ENCODE measurements at regions of chr17 and their contacts with region 1.

Region 1: DNA sequence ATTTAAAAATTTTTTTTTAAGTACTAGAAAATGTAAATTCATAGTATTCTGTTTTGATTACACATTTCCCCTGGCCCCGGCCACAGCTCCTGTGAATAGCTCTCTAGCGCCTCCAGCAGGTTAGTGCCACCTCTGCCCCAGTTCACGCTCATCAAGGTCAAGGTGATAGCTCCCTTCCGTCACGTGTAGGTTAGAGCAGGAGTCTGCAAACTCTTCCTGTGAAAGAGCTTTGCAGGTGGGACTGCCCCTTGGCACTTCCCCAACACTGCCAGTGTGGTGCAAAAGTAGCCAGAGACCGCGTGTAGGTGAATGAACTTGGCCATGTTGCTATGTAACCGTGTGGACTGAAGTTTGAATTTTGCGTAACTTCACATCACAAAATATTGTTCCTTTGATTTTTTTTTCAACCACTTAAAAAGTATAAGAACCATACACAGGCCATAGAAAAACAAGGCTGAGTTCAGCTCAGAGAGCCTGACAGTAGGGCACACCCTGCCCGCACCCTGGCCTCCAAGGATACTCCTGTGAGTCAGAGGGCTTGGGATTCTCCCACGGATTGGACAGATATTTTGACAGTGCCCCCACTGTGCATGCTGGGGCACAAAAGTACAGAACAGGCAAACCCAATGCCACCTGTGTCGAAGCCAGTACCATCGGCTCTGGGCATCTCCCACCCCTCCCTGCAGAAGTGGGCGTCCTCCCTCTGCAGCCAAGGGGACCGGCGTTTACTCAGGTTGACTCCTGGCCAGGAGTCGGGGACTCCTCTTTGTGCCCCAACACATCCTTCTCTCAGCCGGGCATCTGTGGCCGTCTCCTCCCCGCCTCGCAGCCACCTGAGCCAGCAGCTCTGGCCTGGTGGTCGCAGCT is 92.0 kb upstream of the CHMP6 start:
- DNase-seq: peak; percentile 87
- ATAC-seq: peak; percentile 78
- H3K4me3 Mint-ChIP-seq: no peak overlapping the region
- H3K27ac Mint-ChIP-seq: peak overlapping the region; percentile 27
- H3K4me1 Mint-ChIP-seq: peaks cover 70% of the 10 kb centered on the region
- H3K27me3 Mint-ChIP-seq: no peaks in the 10 kb centered on the region

Region 2: DNA sequence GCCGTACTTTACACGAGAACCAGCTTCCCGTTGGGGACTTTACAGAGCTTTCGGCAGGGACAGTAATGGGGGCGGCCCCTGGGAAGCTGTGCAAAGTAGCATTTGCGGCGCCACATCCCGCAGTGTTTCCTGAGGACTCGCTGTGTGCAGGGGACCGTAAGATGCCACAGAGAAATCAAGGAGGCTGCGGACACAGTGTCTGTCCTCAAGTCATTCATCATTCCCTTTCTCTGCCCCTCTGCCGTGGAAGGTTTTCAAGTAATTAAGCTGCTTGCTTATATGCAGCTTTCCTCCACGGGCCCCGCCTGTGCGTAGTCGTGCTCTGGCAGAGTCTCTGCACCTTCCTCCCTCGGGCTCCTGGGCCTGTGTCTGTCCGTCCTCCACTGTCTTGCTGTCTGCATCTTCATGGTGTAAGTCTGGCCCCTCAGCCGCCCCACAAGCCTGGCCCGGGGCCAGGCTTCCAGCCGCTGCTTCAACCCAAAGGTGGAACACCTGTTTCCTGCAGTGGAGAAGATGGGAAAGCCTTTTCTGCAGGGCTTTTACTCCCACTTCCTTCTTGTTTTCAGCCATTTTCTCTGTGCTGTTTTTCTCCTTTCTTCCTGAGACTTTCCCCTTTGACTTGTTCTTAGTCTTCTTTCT is 124.9 kb before region 1 on chr17:
- CTCF ChIA-PET with region 1: interaction called, 10 read pairs
- DNase-seq: no peak
- ATAC-seq: peak; percentile 62
- H3K4me3 Mint-ChIP-seq: peak overlapping the region; percentile 14
- H3K27ac Mint-ChIP-seq: peak overlapping the region; percentile 88
- H3K4me1 Mint-ChIP-seq: peaks cover 63% of the 10 kb centered on the region
- H3K27me3 Mint-ChIP-seq: no peaks in the 10 kb centered on the region

Region 3: DNA sequence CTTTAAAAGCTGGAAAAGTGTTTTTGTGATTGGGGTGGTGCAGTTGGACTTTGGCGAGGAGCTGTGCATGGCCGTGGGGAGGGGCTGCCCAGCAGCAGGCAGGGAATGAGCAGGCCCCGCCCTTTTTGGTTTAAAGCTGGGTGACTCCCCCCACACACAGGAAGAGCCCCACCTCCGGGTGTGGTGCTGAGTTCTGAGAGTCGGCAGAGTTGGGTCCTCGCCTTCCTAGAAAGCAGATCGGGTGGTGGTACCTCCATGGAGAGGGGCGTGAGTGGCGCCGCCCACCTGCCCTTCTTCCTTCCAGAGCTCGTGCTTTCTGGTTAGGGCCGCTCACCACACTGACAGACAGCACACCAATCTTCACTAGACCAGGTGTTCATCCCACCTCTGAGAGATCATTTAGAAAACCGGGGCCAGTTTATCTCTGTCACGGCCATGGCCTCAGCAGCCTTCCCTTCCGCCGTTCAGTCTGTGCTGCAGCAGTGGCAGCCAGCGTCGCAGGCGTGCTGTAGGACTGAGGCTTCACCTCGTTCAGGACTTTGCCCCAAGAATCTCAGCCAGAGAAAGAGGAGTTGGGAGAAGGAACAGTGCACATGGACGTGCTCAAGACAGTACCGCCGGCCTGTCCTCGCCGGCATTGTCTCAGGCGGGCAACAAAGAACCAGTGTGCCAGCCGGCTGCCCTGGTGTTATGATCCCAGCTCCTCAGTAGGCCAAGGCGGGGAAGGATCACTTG is 52.0 kb before region 1 on chr17:
- CTCF ChIA-PET with region 1: interaction called, 11 read pairs
- DNase-seq: peak; percentile 94
- ATAC-seq: peak; percentile 94
- H3K4me3 Mint-ChIP-seq: peak overlapping the region; percentile 1
- H3K27ac Mint-ChIP-seq: peak overlapping the region; percentile 92
- H3K4me1 Mint-ChIP-seq: peaks cover 75% of the 10 kb centered on the region
- H3K27me3 Mint-ChIP-seq: no peaks in the 10 kb centered on the region

Region 4: GRCh38 chr17:80866147-80866793 is 33.4 kb before region 1 on chr17:
- CTCF ChIA-PET with region 1: interaction called, 26 read pairs
- DNase-seq: peak; percentile 88
- ATAC-seq: peak; percentile 71
- H3K4me3 Mint-ChIP-seq: no peak overlapping the region
- H3K27ac Mint-ChIP-seq: peak overlapping the region; percentile 78
- H3K4me1 Mint-ChIP-seq: peaks cover 88% of the 10 kb centered on the region
- H3K27me3 Mint-ChIP-seq: no peaks in the 10 kb centered on the region

Region 5: GRCh38 chr17:80876950-80877728 is 22.5 kb before region 1 on chr17:
- CTCF ChIA-PET with region 1: interaction called, 11 read pairs
- DNase-seq: peak; percentile 92
- ATAC-seq: peak; percentile 86
- H3K4me3 Mint-ChIP-seq: peak overlapping the region; percentile 45
- H3K27ac Mint-ChIP-seq: peak overlapping the region; percentile 98
- H3K4me1 Mint-ChIP-seq: peaks cover 76% of the 10 kb centered on the region
- H3K27me3 Mint-ChIP-seq: no peaks in the 10 kb centered on the region

Region 6: DNA sequence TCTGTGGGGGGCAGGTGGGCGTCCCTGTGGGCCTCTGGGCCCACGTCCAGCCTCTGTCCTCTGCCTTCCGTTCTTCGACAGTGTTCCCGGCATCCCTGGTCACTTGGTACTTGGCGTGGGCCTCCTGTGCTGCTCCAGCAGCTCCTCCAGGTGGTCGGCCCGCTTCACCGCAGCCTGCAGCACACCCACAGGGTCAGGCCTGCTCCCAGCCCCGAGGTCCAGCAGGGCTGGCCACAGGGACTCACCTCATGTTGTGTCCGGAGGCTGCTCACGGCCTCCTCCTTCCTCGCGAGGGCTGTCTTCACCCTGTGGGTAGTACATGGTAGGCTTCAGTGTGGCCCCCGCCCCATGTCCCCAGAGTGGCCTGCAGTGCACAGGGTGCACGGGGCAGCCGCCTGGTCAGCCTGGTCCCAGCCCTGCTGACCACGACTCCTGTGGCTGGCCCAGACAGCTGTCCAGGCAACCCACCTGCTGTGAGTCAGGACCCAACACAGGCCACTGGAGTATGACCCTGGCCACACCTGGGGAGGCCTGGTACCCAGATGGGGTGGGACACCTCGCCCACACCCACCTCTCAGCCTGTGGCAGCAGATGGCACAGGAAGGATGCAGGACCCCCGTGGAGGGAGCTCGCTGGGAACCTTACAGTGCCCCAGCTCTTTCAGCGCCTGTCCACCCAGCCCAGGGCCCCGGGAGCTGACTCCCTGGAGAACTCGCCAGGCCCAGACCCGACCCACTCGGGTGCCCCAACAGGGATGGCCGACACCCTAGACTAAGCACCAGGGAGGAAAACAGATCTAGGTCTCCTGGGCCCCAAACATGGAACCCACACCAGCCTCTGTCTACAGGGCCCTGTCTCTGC is 290.3 kb after region 1 on chr17:
- CTCF ChIA-PET with region 1: no interaction called
- DNase-seq: no peak
- ATAC-seq: no peak
- H3K4me3 Mint-ChIP-seq: no peak overlapping the region
- H3K27ac Mint-ChIP-seq: no peak overlapping the region
- H3K4me1 Mint-ChIP-seq: no peaks in the 10 kb centered on the region
- H3K27me3 Mint-ChIP-seq: no peaks in the 10 kb centered on the region

Measured in activated CD8-positive, alpha-beta memory T cell treated with anti-CD3 and anti-CD28 coated beads, Interleukin-2, amount 10 ng/mL, durations not matched to agents 7 days and 5 days (primary cell).